IMR-90 (cell line): ENCODE measurements at regions of chr19 and their contacts with region 1.

Region 1: GRCh38 chr19:23365222-23365621 is 30.0 kb downstream of the ZNF91 start:
- DNase-seq: no peak
- ATAC-seq: no peak
- H3K4me3 ChIP-seq: no peak overlapping the region
- H3K27ac ChIP-seq: no peak overlapping the region
- H3K4me1 ChIP-seq: no peaks in the 10 kb centered on the region
- H3K27me3 ChIP-seq: no peaks in the 10 kb centered on the region
- CTCF ChIP-seq: no peak
- POLR2A ChIP-seq: no peak
- RAD21 ChIP-seq: no peak

Region 2: DNA sequence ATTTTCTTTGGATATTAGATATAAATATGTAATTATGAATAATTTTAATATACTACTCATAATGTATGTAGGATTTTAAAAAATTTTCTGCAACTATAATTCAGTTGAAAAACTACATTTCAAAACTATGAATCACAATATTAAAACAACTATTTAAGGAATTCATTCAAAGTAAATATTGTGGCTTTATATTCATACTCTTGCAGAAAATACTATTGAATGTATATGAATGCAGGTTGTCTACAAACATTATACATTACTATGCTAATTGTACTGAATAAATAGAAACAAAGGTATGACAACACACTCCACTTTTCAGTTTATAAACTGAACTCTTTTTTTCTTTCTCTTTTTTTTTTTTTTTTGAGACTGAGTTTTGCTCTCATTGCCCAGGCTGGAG is 15.9 kb after region 1 on chr19:
- CTCF ChIA-PET with region 1: no interaction called
- POLR2A ChIA-PET with region 1: no interaction called
- dilution Hi-C with region 1: no loop called
- in situ Hi-C with region 1: no loop called
- intact Hi-C with region 1: no loop called
- DNase-seq: no peak
- ATAC-seq: no peak
- H3K4me3 ChIP-seq: no peak overlapping the region
- H3K27ac ChIP-seq: no peak overlapping the region
- H3K4me1 ChIP-seq: no peaks in the 10 kb centered on the region
- H3K27me3 ChIP-seq: no peaks in the 10 kb centered on the region
- CTCF ChIP-seq: no peak
- POLR2A ChIP-seq: no peak
- RAD21 ChIP-seq: no peak

Region 3: DNA sequence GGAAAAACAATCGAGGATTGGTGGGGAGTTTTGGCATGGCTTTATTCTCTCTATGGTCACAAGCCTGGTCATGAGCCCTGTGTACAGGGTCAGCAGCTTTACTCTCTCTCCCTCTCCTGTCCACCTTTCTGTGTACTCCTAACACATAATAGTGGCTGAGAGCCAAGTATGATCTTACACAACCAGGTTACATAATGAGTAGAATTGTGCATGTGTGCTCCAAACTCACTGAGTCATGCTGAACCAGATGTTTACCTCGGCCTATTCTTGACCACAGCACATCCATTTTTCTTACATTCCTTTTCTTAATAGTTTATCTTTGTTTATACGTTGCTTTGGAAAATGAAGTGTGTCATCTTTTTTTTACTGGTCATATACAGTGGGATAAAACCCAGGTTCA is 774.9 kb after region 1 on chr19:
- CTCF ChIA-PET with region 1: no interaction called
- POLR2A ChIA-PET with region 1: no interaction called
- dilution Hi-C with region 1: no loop called
- in situ Hi-C with region 1: loop called (anchors 25 kb)
- intact Hi-C with region 1: no loop called
- DNase-seq: peak; percentile 96
- ATAC-seq: peak; percentile 83
- H3K4me3 ChIP-seq: no peak overlapping the region
- H3K27ac ChIP-seq: peak overlapping the region; percentile 34; the same call in 1 of the 2 replicates
- H3K4me1 ChIP-seq: peaks cover 2% of the 10 kb centered on the region; the same call in 1 of the 2 replicates
- H3K27me3 ChIP-seq: no peaks in the 10 kb centered on the region
- CTCF ChIP-seq: no peak
- POLR2A ChIP-seq: no peak
- RAD21 ChIP-seq: no peak